H1 (cell line): ENCODE measurements at regions of chr10 and their contacts with region 1.

Region 1: DNA sequence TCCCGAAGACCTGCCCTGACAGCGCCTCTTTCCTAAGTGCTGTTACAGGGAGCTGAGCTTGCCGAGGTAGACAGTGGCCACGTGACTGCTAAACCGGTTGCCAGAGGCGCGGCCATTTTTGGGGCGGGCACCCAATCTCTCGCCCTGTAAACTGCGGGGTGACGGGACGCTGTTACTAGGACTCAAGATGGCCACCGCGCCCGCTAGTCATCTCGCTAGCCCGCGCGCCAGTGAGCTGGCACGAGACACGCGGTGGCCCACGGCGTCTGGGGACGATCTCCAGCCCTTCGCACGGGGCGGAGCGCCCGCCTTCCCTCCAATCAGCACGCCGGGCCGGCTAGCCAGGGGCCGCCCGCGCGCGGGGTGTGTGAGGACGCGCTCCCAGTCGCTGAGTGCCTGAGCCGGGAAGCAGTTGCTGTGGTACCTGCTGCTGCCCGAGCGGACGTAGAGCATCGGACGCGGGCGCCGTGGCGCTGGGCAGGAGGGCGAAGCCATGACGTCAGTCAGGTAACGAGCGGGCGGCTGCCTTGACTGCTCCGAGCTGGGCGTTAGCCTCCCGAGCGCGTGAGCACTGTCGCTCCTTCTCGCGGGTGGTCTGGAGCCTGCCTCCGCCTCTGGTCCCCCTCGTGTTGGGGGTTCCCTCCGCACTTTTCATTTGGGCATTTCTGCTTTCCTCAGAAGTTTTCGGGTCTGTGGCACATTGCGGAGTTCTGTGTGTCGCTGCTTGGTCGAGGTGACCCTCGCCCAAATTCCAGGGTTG is 25.5 kb downstream of the ADK start:
- DNase-seq: peak; percentile 89 to 94
- H3K4me3 ChIP-seq: peak overlapping the region; percentile 78 to 89 (median 83)
- H3K27ac ChIP-seq: peak overlapping the region; percentile 92
- H3K4me1 ChIP-seq: peaks cover 0 to 3% (median under 1%) of the 10 kb centered on the region in 4 experiments; a peak in 3 of 7 replicates
- H3K27me3 ChIP-seq: no peaks in the 10 kb centered on the region
- CTCF ChIP-seq: 0 out of 4 replicates have a peak, but pooled peaks of 1 of the 3 experiments have one; percentile 3
- EP300 ChIP-seq: no peak
- POLR2A ChIP-seq: peak in 1 of 2 experiments; percentile 95; a peak in 2 of 3 replicates
- RAD21 ChIP-seq: 0 out of 4 replicates have a peak, but pooled peaks of 1 of the 2 experiments have one; percentile 0

Region 2: GRCh38 chr10:74151056-74151878 is 25.3 kb before region 1 on chr10 and contains the start of gene ADK:
- CTCF ChIA-PET with region 1: interaction called, 3 read pairs
- POLR2A ChIA-PET with region 1: interaction called, 20 read pairs
- DNase-seq: peak; percentile 98 to 100
- H3K4me3 ChIP-seq: peak within 1 kb of the TSS; percentile 79 to 98 (median 94)
- H3K27ac ChIP-seq: peak within 1 kb of the TSS; percentile 95
- H3K4me1 ChIP-seq: peaks cover 0 to 2% (median under 1%) of the 10 kb centered on the region in 4 experiments; a peak in 3 of 7 replicates
- H3K27me3 ChIP-seq: no peaks in the 10 kb centered on the region
- CTCF ChIP-seq: peak in 2 of 3 experiments; percentile 35 to 47; a peak in 3 of 4 replicates
- EP300 ChIP-seq: no peak
- POLR2A ChIP-seq: peak in 1 of 2 experiments; percentile 95; a peak in 2 of 3 replicates
- RAD21 ChIP-seq: peak in 1 of 2 experiments; percentile 41; a peak in 2 of 4 replicates
- total RNA-seq, gene ADK: 39.8 and 42.4 TPM in 2 replicates

Region 3: GRCh38 chr10:74156919-74157289 is 19.7 kb before region 1 on chr10:
- CTCF ChIA-PET with region 1: interaction called, 3 read pairs
- POLR2A ChIA-PET with region 1: interaction called, 14 read pairs
- DNase-seq: no peak
- H3K4me3 ChIP-seq: no peak overlapping the region
- H3K27ac ChIP-seq: no peak overlapping the region
- H3K4me1 ChIP-seq: no peaks in the 10 kb centered on the region; a peak in 4 of 7 replicates
- H3K27me3 ChIP-seq: no peaks in the 10 kb centered on the region
- CTCF ChIP-seq: no peak
- EP300 ChIP-seq: no peak
- POLR2A ChIP-seq: no peak
- RAD21 ChIP-seq: no peak

Region 4: DNA sequence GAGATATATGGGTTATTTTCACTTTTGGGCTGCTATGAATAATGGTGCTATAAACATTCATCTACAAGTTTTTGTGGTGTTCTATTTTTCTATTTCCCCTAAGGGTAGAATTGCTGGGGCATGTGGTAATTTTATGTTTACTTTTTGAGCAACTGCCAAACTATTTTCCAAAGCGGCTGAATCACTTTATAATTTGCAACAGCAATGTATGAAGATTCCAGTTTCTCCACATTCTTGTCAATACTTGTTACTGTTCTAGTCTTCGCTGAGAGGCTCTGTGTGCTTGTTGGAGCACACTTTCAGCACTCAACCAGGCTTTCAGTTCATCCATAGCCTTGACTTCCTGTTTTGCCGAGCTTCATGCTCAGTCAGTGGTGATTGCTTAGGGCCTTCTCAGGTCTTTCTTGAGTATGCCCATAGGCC is 13.4 kb after region 1 on chr10:
- CTCF ChIA-PET with region 1: interaction called, 3 read pairs
- POLR2A ChIA-PET with region 1: interaction called, 13 read pairs
- DNase-seq: no peak
- H3K4me3 ChIP-seq: no peak overlapping the region
- H3K27ac ChIP-seq: no peak overlapping the region
- H3K4me1 ChIP-seq: peaks cover 0 to 3% (median 1%) of the 10 kb centered on the region in 4 experiments; a peak in 2 of 7 replicates
- H3K27me3 ChIP-seq: no peaks in the 10 kb centered on the region
- CTCF ChIP-seq: no peak
- EP300 ChIP-seq: no peak
- POLR2A ChIP-seq: no peak
- RAD21 ChIP-seq: no peak

Region 5: GRCh38 chr10:74306227-74306982 is 129.8 kb after region 1 on chr10:
- CTCF ChIA-PET with region 1: no interaction called
- POLR2A ChIA-PET with region 1: no interaction called
- DNase-seq: no peak
- H3K4me3 ChIP-seq: no peak overlapping the region
- H3K27ac ChIP-seq: no peak overlapping the region
- H3K4me1 ChIP-seq: peaks cover 0 to 7% (median 0%) of the 10 kb centered on the region in 4 experiments; a peak in 1 of 7 replicates
- H3K27me3 ChIP-seq: no peaks in the 10 kb centered on the region
- CTCF ChIP-seq: no peak
- EP300 ChIP-seq: no peak
- POLR2A ChIP-seq: no peak
- RAD21 ChIP-seq: no peak